ENCODE measurements at regions of chr1 and their contacts with region 1.

Region 1: GRCh38 chr1:165580941-165581871 is 37.4 kb downstream of the LRRC52 start:
- DNase-seq: no peak
- H3K4me3 ChIP-seq: no peak overlapping the region
- H3K27ac ChIP-seq: no peak overlapping the region
- H3K27me3 ChIP-seq: no peaks in the 10 kb centered on the region
- CTCF ChIP-seq: no peak

Region 2: DNA sequence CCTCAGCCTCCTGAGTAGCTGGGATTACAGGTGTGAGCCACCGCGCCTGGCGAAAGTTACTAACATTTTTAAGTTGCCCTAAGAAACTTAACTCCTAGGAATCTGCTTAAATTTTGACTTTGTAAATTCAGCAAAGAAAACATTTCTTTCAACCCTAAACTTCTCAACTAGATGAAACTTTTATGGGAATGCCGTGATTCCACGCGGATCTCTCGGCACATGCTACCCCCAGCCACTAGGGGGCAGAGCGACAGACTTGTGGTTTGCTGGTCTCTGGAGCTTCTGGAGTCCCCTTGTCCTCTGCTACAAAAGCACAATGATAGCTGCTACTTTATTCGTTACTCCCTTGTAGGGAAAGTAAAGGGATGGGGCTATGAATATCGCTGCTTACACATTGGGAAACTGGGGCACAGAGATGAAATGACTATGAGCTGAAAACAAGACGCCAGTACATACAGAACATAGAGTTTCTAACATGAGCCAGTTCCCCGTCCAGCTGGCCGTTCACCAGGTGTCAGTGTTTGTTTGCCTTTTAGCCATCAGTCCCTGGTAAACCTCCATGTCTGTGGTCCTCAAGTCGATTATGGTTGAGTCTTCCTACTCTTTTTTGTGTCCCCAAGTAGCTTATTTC is 907.5 kb before region 1 on chr1:
- intact Hi-C with region 1: no loop called
- DNase-seq: no peak
- H3K4me3 ChIP-seq: no peak overlapping the region
- H3K27ac ChIP-seq: no peak overlapping the region
- H3K27me3 ChIP-seq: no peaks in the 10 kb centered on the region
- CTCF ChIP-seq: peak in 49 of 56 donors; percentile 12 to 59 (median 36)

Region 3: DNA sequence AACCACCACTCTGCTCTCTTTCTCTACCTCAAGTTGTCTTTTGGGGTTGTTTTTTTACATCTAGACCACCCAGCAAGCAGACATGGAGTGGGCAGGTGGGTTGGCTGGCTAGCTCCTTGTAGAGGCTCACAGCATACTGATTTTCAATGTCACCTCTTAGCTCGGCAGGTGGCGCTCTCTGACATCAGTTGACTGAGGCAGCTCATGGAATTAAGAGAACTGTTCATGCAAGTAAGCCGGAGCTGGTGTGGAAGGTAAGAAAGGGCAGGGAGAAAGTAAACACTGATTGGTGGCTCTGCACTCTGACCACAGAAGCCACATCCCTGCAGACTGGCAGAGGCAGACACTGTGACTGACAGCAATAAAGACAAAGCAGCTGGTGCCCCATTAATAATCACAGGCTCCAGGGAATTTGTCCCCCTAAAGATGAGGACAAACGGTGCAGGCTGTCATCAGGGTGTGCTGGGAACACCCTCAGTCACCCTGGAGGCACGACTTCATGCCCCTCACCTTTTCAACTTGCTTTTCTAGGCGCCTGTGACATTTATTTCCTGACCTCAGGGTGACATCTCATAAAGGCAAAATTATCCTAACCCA is 451.5 kb before region 1 on chr1:
- intact Hi-C with region 1: loop called in 1 of 2 experiments (anchors 10 kb)
- DNase-seq: peak in 9 of 10 donors; percentile 34 to 77 (median 64)
- H3K4me3 ChIP-seq: no peak overlapping the region
- H3K27ac ChIP-seq: no peak overlapping the region
- H3K27me3 ChIP-seq: peaks cover 0 to 83% (median 11%) of the 10 kb centered on the region in 45 donors
- CTCF ChIP-seq: peak in 53 of 56 donors; percentile 12 to 69 (median 53)

Region 4: DNA sequence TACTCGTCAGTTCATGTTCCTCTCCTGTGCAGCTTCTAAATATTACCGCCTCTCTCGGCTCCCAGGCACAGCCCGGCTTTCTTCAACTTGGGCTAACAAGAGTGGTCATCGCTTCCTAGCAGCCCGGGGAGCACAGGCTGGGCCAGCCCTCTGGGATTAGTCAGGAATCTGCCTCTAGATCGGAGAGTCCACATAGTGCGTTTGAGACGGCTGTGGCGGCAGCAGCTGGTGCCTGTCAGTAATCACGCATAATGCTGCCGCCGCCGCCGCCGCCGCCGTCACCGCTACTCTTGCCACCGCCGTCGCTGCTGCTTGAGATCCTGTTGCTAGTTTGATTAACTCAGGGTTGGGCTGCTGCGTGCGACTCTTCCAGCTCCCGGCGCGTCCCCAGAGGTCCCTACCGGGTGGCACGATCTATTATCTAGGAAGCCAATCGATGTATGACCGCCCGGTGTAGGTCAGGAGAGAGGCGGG is 136.3 kb before region 1 on chr1 and contains the start of gene RXRG:
- intact Hi-C with region 1: no loop called
- DNase-seq: peak in 9 of 10 donors; percentile 11 to 55 (median 39)
- H3K4me3 ChIP-seq: peak within 1 kb of the TSS; percentile 25 to 71 (median 54)
- H3K27ac ChIP-seq: peak within 1 kb of the TSS in 6 of 59 donors; percentile 2 to 43 (median 14)
- H3K27me3 ChIP-seq: peaks cover 0 to 39% (median 5%) of the 10 kb centered on the region in 45 donors
- CTCF ChIP-seq: no peak
- total RNA-seq, gene RXRG: 2.0 to 16.0 (median 6.2) TPM

Measured in dorsolateral prefrontal cortex (tissue), 120 donors.